K562 (cell line): ENCODE measurements at regions of chr19 and their contacts with region 1.

Region 1: DNA sequence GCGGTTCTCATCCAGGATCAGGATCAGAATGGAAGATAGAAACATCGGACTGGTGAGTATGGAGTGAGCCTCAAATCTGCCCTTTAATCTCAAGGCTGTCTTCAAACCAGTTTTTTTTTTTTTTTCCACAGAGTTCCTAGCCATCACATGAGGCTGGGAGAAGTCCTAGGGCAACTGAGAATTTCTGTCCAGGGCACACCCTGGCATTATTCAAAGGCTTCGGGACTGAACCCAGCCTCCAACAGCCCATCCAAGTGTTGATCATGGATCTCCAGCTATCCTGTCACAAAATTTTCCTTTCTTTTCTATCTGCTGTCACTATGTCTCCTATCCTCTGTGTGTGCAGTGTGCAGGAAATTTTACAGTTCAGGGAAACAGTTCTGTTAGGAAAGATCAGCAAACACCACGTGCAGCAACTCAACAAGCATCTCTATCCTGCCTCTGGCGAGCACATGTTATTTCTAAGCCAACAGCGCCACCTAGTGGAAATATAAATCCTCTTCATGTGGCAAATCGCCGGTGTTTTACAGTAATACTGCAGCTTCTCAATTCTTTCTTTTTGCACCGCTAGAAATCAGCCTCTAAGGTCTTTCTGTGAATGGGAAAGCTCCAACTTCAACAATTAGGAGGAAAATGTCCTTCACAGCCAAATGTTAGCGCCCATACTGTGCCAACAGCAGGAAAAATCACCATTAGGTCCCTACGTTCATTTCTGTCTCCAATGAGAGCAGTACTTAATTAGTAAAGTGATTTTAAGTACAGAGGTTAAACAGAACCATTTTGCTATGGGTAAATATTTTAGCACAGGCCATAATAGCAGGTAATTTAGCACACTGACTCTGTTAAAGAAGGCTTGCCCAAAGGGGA is 21.4 kb upstream of the ZNF181 start:
- DNase-seq: peak; percentile 64 to 84 (median 64)
- ATAC-seq: peak; percentile 92
- H3K4me3 ChIP-seq: no peak overlapping the region
- H3K27ac ChIP-seq: no peak overlapping the region
- H3K4me1 ChIP-seq: peaks cover 0 to 4% of the 10 kb centered on the region in 2 experiments; a peak in 2 of 5 replicates
- H3K27me3 ChIP-seq: 0 out of 5 replicates have a peak, but pooled peaks cover 0 to 4% of the 10 kb centered on the region in 2 experiments
- CTCF ChIP-seq: peak; percentile 71 to 91 (median 83)
- EP300 ChIP-seq: no peak
- POLR2A ChIP-seq: no peak
- RAD21 ChIP-seq: peak; percentile 73 to 89

Region 2: GRCh38 chr19:33430674-33431277 is 1281.9 kb before region 1 on chr19:
- CTCF ChIA-PET with region 1: no interaction called
- POLR2A ChIA-PET with region 1: no interaction called
- in situ Hi-C with region 1: loop called (anchors 25 kb)
- intact Hi-C with region 1: no loop called
- DNase-seq: peak; percentile 62 to 77 (median 70)
- ATAC-seq: peak; percentile 99
- H3K4me3 ChIP-seq: no peak overlapping the region
- H3K27ac ChIP-seq: no peak overlapping the region
- H3K4me1 ChIP-seq: peaks cover 0 to 9% of the 10 kb centered on the region in 2 experiments; a peak in 2 of 5 replicates
- H3K27me3 ChIP-seq: peaks cover 4 to 47% of the 10 kb centered on the region in 2 experiments; a peak in 4 of 5 replicates
- CTCF ChIP-seq: peak; percentile 83 to 84 (median 84)
- EP300 ChIP-seq: no peak
- POLR2A ChIP-seq: no peak
- RAD21 ChIP-seq: peak; percentile 59 to 86

Region 3: DNA sequence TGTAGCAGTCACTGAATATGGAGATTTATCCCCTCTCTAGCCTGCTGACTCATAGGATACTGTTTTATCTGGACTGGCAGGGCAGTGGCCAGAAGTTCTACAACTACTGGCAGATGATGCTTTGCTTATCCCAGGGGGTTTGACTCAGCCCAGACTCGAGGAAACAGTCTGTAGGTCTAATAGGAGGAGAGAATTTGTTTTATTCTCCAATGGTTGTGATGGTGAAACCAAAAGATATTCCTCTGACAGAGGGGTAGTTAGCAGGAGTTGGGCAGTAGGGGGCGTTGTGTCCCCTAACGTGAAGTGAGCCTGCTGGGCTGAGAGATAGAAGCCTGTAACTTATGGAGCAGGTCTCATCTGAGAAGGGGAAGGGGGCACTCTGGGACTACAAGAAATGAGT is 156.1 kb before region 1 on chr19:
- CTCF ChIA-PET with region 1: interaction called, 5 read pairs
- POLR2A ChIA-PET with region 1: no interaction called
- in situ Hi-C with region 1: no loop called
- intact Hi-C with region 1: loop called (anchors 1 kb)
- DNase-seq: peak; percentile 25 to 49 (median 28)
- ATAC-seq: peak; percentile 95
- H3K4me3 ChIP-seq: no peak overlapping the region
- H3K27ac ChIP-seq: no peak overlapping the region
- H3K4me1 ChIP-seq: no peaks in the 10 kb centered on the region
- H3K27me3 ChIP-seq: peaks cover 4 to 21% of the 10 kb centered on the region in 2 experiments; a peak in 3 of 5 replicates
- CTCF ChIP-seq: peak; percentile 61 to 71 (median 61)
- EP300 ChIP-seq: no peak
- POLR2A ChIP-seq: no peak
- RAD21 ChIP-seq: peak in 1 of 2 experiments; percentile 63; a peak in 2 of 4 replicates

Region 4: GRCh38 chr19:34639491-34640085 is 73.0 kb before region 1 on chr19:
- CTCF ChIA-PET with region 1: interaction called, 14 read pairs
- POLR2A ChIA-PET with region 1: no interaction called
- in situ Hi-C with region 1: loop called (anchors 5 kb)
- intact Hi-C with region 1: loop called (anchors 1 kb)
- DNase-seq: peak; percentile 39 to 80 (median 52)
- ATAC-seq: peak; percentile 86
- H3K4me3 ChIP-seq: no peak overlapping the region
- H3K27ac ChIP-seq: no peak overlapping the region
- H3K4me1 ChIP-seq: no peaks in the 10 kb centered on the region
- H3K27me3 ChIP-seq: no peaks in the 10 kb centered on the region
- CTCF ChIP-seq: peak; percentile 75 to 95 (median 81)
- EP300 ChIP-seq: no peak
- POLR2A ChIP-seq: no peak
- RAD21 ChIP-seq: peak; percentile 54 to 84